ENCODE measurements at regions of chr2 and their contacts with region 1.

Region 1: GRCh38 chr2:192029089-192029488 is 165.6 kb downstream of the TMEFF2 start:
- DNase-seq: no peak
- ATAC-seq: no peak
- H3K4me3 ChIP-seq: no peak overlapping the region
- H3K27ac ChIP-seq: no peak overlapping the region
- H3K4me1 ChIP-seq: peaks cover 0 to 30% (median 5%) of the 10 kb centered on the region in 9 donors
- H3K27me3 ChIP-seq: no peaks in the 10 kb centered on the region
- CTCF ChIP-seq: no peak

Region 2: DNA sequence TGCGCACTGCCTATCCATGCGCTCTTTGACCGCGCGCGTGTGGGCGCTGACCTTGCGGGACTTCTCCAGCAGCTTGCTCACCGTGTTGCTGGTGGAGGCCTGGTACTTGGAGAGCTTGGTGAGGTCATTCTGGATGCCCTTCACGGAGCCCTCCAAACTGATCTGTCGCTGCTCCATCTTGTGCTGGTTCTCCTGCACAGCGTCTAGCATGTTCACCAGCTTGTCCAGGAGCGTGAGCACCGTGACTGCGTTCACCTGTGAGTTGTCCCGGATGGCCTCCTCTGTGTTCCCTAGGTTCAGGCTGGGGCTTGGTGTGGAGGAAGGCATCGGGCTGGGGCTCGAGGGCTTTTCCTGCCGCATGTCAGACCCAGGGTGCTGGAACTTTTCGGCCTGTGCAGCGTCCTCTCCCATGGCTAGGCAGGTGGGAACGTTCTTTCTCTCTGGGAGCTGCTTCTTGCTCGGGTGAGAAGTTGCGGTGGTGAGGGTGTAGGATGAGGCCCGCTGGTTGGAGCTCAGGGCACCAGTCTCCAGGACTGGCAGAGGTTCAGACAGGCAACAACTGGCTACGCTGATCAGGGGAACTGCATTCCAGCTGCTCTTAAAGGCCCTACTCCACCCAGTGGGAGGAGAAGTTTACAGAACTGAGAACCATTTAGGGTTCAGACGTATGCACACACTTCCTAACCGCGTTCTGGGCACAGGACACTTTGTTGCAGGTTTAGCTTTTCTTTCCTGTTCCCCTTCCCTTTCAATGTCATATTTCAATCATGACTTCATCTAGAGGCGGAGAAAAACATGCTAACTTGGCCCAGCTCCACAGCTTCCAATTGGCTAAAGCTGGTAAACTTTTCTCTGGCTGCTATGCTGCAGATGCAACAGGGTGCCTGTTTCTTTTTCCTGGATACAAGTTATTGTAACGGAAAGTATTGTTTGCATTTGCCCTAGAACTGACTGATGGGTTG is 182.3 kb before region 1 on chr2 and contains the start of gene CAVIN2:
- intact Hi-C with region 1: loop called in 3 of 10 experiments (anchors 5 to 10 kb)
- DNase-seq: peak; percentile 50 to 88
- ATAC-seq: peak; percentile 79 to 92 (median 88)
- H3K4me3 ChIP-seq: peak within 1 kb of the TSS; percentile 62 to 81 (median 76)
- H3K27ac ChIP-seq: peak within 1 kb of the TSS; percentile 87 to 97 (median 94)
- H3K4me1 ChIP-seq: peaks cover 10 to 57% (median 42%) of the 10 kb centered on the region in 9 donors
- H3K27me3 ChIP-seq: no peaks in the 10 kb centered on the region
- CTCF ChIP-seq: peak in 3 of 9 donors; percentile 16 to 23 (median 17)
- total RNA-seq, gene CAVIN2: 73.5 to 126 (median 101) TPM

Region 3: DNA sequence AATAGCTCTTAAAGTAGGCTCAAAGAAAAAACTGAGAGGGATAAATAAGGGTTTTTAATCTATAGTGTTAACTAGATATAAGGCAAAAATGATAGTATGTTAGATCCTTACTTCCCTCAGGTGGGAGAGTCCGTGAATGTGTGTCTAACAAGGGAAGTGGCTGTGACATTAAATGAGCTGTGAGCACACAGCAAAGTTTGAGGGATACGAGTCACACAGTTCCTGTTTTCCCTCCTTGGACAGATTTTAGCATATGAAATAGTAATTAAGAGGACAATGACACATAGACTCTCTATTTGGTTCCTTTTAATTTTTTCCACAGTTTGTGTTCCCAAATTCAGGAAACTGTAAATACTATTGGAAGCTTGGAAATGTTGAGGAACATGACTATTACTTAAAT is 33.8 kb before region 1 on chr2:
- intact Hi-C with region 1: loop called in 1 of 10 experiments (anchors 1 kb)
- DNase-seq: no peak
- ATAC-seq: peak; percentile 30 to 93 (median 76)
- H3K4me3 ChIP-seq: no peak overlapping the region
- H3K27ac ChIP-seq: peak overlapping the region in 7 of 10 donors; percentile 9 to 66 (median 24)
- H3K4me1 ChIP-seq: peaks cover 0 to 16% (median 4%) of the 10 kb centered on the region in 9 donors
- H3K27me3 ChIP-seq: no peaks in the 10 kb centered on the region
- CTCF ChIP-seq: no peak